ENCODE measurements at regions of chr10 and their contacts with region 1.

Region 1: DNA sequence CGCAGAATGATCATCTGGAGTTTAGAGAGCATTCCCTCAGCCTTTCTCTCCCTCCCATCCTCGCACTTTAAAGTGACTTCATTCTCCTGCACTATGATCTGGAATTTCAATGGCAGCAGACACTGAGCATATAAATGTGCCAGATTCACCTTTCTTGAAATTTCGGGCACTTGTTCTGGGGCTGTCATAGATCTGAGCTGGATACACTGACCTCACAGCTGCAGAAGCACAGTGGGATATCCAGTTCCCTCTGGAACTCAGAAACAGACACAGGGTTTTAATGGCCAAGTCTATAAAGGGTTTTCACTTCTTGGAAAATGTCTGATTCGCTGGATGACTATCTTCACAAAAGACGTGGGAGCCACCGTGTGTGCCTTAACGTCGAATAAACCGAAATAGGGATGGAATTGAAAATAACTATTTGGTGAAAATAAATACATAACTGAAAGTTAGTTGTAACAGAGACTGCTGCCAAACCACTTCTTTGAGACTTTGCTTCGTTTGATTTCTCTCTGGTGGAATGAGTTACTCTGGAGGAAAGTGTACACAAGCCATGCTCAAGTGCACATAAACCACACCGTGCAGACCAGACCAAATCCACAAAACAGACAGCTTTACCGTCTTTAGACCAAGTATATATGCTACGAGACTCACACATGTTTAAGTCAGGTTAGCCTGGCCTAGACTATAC is 126.1 kb downstream of the SVIL start:
- DNase-seq: no peak
- H3K4me3 ChIP-seq: no peak overlapping the region
- CTCF ChIP-seq: no peak

Region 2: GRCh38 chr10:28959850-28960501 is 548.7 kb before region 1 on chr10:
- CTCF ChIA-PET with region 1: no interaction called
- POLR2A ChIA-PET with region 1: no interaction called
- DNase-seq: no peak
- H3K4me3 ChIP-seq: no peak overlapping the region
- CTCF ChIP-seq: no peak

Region 3: DNA sequence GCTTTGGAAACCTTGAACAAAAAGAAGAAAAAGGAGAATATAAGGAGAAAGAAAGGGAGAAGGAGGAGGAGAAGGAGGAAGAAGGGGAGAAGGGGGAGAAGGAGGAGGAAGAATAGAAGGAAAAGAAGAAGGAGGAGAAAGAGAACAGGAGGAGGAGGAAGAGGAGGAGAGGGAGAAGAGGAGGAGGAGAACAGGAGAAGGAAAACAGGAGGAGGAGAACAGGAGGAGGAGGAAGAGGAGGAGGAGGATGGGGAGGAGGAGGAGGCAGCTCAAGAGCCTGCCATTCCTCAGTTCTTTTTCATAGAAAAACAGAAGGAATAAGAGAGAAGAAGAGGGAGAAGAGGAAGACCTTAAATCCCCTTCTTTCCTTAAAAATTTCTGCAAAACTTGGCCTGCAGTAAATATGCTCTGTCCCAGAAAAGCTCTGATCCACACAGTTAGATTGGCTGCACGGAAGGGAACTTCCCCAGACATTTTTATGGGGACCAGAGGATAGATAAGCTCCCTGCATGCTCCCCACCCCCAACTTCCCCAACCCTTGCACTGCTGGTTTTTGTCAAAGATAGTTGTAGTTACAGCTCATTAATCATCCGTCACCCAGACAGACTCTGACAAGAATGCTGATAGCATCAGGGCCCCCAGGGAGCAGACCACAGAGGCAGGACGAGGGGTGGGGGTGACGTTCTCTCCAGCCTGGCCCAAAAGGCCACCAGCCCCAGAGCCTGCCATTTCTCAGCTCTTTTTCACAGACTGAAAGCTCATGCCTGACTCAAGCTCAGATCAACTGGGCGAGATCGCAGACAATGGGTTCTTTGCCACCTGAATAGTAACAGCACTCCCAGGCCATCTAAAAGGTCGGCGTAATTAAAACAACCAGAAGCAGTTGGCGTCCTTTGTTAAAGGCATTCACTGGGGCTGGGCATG is 254.3 kb before region 1 on chr10:
- CTCF ChIA-PET with region 1: no interaction called
- POLR2A ChIA-PET with region 1: no interaction called
- DNase-seq: no peak
- H3K4me3 ChIP-seq: no peak overlapping the region
- CTCF ChIP-seq: no peak

Region 4: GRCh38 chr10:29377333-29377961 is 131.3 kb before region 1 on chr10:
- CTCF ChIA-PET with region 1: interaction called, 31 read pairs
- POLR2A ChIA-PET with region 1: no interaction called
- DNase-seq: no peak
- H3K4me3 ChIP-seq: no peak overlapping the region
- CTCF ChIP-seq: peak; percentile 43